Activated B cell treated with CpG ODN at 0.5 μM for 24 hours (primary cell): ENCODE measurements at regions of chr5 and their contacts with region 1.

Region 1: GRCh38 chr5:150436141-150436680 is 13.3 kb downstream of the RPS14 start:
- DNase-seq: peak; percentile 76
- ATAC-seq: peak; percentile 95
- H3K4me3 Mint-ChIP-seq: peak overlapping the region; percentile 50
- H3K27ac Mint-ChIP-seq: peak overlapping the region; percentile 92
- H3K4me1 Mint-ChIP-seq: peaks cover 47% of the 10 kb centered on the region
- H3K27me3 Mint-ChIP-seq: no peaks in the 10 kb centered on the region
- CTCF ChIP-seq: no peak

Region 2: DNA sequence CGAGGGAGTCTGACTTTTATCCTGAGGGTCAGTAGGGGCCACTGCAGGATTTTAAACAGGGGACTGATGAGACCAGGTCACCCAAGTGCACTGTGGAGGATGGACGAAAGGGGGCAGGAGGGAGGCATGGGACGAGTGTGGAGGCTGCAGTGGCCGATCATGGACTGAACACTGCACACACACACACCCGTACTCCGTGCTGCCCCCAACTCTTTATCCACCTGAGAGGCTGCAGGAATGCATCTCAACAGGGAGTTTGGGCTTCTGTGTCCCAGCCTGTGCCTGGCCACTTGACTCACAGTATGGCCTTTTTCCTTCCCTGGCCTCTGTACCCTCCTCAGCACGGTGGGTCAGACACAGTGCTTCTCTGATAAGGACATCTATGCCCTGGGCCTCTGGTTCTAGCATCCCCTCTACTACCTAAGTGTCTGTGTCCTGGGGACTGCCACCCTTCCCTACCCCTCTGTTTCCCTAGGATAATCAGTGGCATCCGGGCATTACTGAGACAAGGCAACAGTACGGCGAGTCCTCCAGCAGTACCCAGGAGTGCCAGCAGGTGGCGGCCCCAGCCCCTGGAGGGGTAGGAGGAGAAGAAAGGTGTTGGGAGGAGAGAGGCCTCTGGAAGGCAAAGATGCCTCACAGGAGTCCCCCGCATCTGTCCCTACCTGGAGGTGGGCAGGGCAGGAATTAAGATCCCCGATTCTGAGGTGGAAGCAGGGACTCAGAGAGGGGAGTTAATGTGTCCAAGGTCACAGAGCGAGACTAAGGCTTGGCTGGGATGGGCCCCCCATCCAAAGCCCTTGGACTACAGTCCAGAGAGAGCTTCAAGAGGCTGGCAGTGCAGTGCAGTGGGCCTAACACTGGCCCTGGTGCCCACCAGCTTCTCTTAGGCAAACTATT is 274.7 kb before region 1 on chr5:
- CTCF ChIA-PET with region 1: interaction called, 3 read pairs
- POLR2A ChIA-PET with region 1: no interaction called
- intact Hi-C with region 1: loop called (anchors 1 kb)
- DNase-seq: peak; percentile 70
- ATAC-seq: peak; percentile 88
- H3K4me3 Mint-ChIP-seq: no peak overlapping the region
- H3K27ac Mint-ChIP-seq: no peak overlapping the region
- H3K4me1 Mint-ChIP-seq: peaks cover 19% of the 10 kb centered on the region
- H3K27me3 Mint-ChIP-seq: peaks cover 8% of the 10 kb centered on the region
- CTCF ChIP-seq: peak; percentile 65

Region 3: DNA sequence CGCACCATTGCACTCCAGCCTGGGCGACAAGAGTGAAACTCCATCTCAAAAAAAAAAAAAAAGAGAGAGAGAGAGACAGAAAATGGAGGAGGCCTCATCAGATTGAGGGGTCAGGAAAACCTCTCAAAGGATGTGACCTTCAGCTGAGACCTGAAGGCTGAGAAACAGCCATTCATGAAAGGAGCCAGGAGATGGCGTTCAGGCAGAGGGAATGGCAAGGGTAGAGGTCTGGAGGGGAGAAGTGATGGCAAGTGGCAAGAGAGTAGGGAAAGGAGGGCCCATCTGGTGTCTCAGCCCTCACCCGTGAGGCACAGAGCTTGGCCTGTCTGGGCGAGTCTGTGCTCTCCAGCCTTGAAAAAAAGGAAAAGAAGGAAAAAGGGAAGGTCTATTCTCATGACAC is 163.7 kb before region 1 on chr5:
- CTCF ChIA-PET with region 1: interaction called, 3 read pairs
- POLR2A ChIA-PET with region 1: no interaction called
- intact Hi-C with region 1: loop called (anchors 1 kb)
- DNase-seq: no peak
- ATAC-seq: no peak
- H3K4me3 Mint-ChIP-seq: no peak overlapping the region
- H3K27ac Mint-ChIP-seq: no peak overlapping the region
- H3K4me1 Mint-ChIP-seq: no peaks in the 10 kb centered on the region
- H3K27me3 Mint-ChIP-seq: peaks cover 9% of the 10 kb centered on the region
- CTCF ChIP-seq: no peak

Region 4: DNA sequence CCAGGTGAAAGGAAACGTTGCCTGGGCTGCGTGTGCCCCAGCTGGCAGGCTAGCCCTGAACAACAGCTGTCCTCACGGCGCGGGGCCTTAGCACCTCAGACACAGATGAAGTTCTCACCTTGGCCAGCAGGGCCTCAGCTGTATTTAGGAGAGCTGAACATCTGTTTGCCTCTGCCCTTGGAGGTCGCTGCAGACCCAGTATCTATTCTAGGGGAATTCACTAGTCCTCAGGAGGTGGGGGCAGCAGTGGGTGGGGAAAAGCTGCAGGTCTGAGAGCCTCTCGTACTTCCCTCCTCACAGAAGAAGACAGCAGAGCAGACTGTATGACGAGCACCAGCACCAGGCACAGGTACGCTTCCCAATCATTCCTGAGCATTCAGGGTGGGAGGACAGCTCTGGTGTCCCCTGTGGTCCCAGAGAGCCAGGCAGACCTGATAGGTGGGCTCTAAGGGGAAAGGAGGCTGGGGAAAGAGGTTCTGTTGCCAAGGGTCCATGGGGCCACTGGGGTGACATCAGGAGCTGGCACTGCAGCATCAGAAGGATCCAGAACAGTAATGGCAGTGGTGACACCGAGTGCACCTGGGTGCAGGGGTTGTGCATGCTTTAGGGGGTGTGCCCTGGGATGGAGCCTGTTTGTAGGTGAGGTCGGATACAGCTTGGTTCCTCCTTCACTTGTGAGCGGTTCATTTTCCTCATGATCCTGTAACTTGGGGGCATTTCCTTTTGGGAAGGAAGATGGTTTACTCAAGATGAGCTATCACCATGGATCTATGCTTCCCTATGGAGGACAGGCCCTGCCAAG is 37.3 kb before region 1 on chr5:
- CTCF ChIA-PET with region 1: interaction called, 175 read pairs
- POLR2A ChIA-PET with region 1: interaction called, 2,478 read pairs
- intact Hi-C with region 1: loop called (anchors 1 kb)
- DNase-seq: peak; percentile 59
- ATAC-seq: peak; percentile 71
- H3K4me3 Mint-ChIP-seq: peak overlapping the region; percentile 28
- H3K27ac Mint-ChIP-seq: peak overlapping the region; percentile 80
- H3K4me1 Mint-ChIP-seq: peaks cover 50% of the 10 kb centered on the region
- H3K27me3 Mint-ChIP-seq: no peaks in the 10 kb centered on the region
- CTCF ChIP-seq: no peak